ENCODE measurements at regions of chr11 and their contacts with region 1.

Region 1: GRCh38 chr11:114262681-114263512 is 33.3 kb upstream of the NNMT start:
- DNase-seq: peak; percentile 14
- ATAC-seq: peak; percentile 65
- H3K4me3 Mint-ChIP-seq: no peak overlapping the region
- H3K27ac Mint-ChIP-seq: no peak overlapping the region
- H3K4me1 Mint-ChIP-seq: no peaks in the 10 kb centered on the region
- H3K27me3 Mint-ChIP-seq: peaks cover 2% of the 10 kb centered on the region
- CTCF ChIP-seq: peak; percentile 48

Region 2: DNA sequence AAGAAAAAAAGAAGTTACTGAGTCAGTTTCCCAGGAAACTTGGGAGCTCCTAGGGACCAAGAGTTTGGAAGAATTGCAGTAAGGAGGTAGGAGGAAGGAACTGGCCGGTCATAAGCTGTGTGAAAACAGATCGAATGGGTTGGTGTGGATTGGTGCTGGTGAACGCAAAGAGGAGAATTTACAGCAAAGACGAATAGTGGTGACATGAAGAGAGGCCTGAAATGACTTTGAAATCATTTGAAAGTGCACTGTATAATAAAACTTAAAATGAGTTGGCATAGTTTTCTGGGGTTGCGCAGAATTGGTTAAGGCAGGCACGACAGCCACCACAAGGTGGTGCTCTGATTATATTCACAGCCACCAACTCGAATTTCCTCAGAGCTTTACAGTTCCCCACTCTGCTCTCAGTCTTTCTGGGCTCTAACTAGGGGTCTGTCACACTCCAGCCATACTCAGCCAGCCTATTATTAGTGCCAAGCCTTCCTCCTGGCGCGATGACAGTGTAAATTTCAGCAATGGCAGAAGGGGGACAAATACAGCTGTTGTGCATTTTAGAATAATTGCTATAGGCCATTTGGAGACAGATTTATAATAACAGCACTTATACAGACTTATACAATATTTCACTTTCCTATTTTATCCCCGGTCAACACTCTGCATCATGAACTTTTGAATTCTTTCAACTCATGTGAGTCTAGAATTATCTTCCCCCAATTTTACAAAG is 366.6 kb before region 1 on chr11:
- CTCF ChIA-PET with region 1: interaction called, 120 read pairs
- POLR2A ChIA-PET with region 1: no interaction called
- intact Hi-C with region 1: loop called (anchors 2 kb)
- DNase-seq: peak; percentile 51
- ATAC-seq: peak; percentile 47
- H3K4me3 Mint-ChIP-seq: no peak overlapping the region
- H3K27ac Mint-ChIP-seq: no peak overlapping the region
- H3K4me1 Mint-ChIP-seq: peaks cover 3% of the 10 kb centered on the region
- H3K27me3 Mint-ChIP-seq: no peaks in the 10 kb centered on the region
- CTCF ChIP-seq: peak; percentile 70

Region 3: DNA sequence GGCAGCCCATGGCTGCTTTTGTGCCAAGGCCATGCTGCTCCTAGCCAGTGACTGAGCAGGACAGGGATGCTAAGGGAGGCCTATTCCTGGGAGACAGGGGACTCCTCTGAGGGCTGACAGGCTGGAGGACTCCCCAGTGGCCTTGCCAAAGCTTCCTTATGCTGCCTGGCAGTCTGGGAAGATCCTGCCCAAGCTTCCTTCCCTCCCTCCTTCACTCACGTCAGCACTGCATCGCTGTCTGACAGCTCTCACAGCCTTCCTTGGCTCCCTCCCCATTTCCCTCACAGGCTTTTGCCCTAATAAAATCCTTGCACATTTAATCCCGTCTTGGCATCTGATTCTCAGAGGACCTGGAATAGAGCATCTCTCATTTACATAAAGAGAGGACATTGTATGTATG is 261.5 kb before region 1 on chr11:
- CTCF ChIA-PET with region 1: interaction called, 168 read pairs
- POLR2A ChIA-PET with region 1: no interaction called
- intact Hi-C with region 1: no loop called
- DNase-seq: no peak
- ATAC-seq: no peak
- H3K4me3 Mint-ChIP-seq: no peak overlapping the region
- H3K27ac Mint-ChIP-seq: no peak overlapping the region
- H3K4me1 Mint-ChIP-seq: no peaks in the 10 kb centered on the region
- H3K27me3 Mint-ChIP-seq: peaks cover 9% of the 10 kb centered on the region
- CTCF ChIP-seq: no peak

Region 4: GRCh38 chr11:114053406-114053805 is 209.5 kb before region 1 on chr11:
- CTCF ChIA-PET with region 1: interaction called, 15 read pairs
- POLR2A ChIA-PET with region 1: no interaction called
- intact Hi-C with region 1: no loop called
- DNase-seq: no peak
- ATAC-seq: no peak
- H3K4me3 Mint-ChIP-seq: no peak overlapping the region
- H3K27ac Mint-ChIP-seq: no peak overlapping the region
- H3K4me1 Mint-ChIP-seq: no peaks in the 10 kb centered on the region
- H3K27me3 Mint-ChIP-seq: peaks cover 18% of the 10 kb centered on the region
- CTCF ChIP-seq: no peak

Region 5: GRCh38 chr11:114192841-114193389 is 70.0 kb before region 1 on chr11:
- CTCF ChIA-PET with region 1: interaction called, 21 read pairs
- POLR2A ChIA-PET with region 1: no interaction called
- intact Hi-C with region 1: no loop called
- DNase-seq: no peak
- ATAC-seq: no peak
- H3K4me3 Mint-ChIP-seq: no peak overlapping the region
- H3K27ac Mint-ChIP-seq: no peak overlapping the region
- H3K4me1 Mint-ChIP-seq: peaks cover 9% of the 10 kb centered on the region
- H3K27me3 Mint-ChIP-seq: no peaks in the 10 kb centered on the region
- CTCF ChIP-seq: no peak

Region 6: DNA sequence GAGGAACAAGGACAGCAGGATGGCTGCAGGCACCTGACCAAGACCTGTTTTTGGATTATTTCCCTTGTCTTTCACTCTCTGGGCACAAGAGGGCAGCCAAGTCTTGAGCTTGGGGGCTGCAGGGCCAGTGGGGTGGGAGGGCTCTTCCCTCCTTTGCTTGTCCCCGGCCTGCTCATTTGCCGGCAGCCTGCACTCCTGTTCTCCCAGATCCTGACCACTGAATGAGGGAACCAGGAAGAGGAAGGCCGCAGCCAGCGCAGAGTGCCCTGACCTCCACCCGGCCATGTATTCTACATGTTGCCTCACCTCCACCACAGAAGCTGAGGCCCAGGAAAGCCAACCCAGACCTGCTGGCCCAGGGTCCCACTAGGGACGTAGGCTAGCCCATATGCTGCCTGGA is 17.8 kb after region 1 on chr11:
- CTCF ChIA-PET with region 1: interaction called, 20 read pairs
- POLR2A ChIA-PET with region 1: interaction called, 6 read pairs
- intact Hi-C with region 1: no loop called
- DNase-seq: peak; percentile 37
- ATAC-seq: no peak
- H3K4me3 Mint-ChIP-seq: no peak overlapping the region
- H3K27ac Mint-ChIP-seq: no peak overlapping the region
- H3K4me1 Mint-ChIP-seq: no peaks in the 10 kb centered on the region
- H3K27me3 Mint-ChIP-seq: peaks cover 28% of the 10 kb centered on the region
- CTCF ChIP-seq: peak; percentile 56

Region 7: DNA sequence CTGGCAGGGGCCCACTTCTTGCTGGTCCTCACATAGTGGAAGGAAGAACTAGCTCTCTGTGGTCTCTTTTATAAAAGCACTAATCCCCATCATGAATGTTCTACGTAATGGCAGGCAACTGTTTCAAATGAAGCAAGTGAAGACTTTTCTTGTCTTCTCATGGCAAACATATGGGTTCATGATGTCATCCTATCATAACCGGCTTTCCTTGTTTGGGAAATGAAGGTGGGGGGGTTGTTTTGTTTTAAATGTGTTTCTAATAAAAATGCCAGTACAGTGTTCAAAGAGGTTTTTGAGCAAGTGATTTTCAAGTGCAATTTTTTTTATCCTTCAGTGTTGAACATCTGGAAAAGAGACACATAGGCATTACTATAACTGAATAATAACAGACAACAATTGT is 209.8 kb after region 1 on chr11:
- CTCF ChIA-PET with region 1: no interaction called
- POLR2A ChIA-PET with region 1: no interaction called
- intact Hi-C with region 1: no loop called
- DNase-seq: no peak
- ATAC-seq: no peak
- H3K4me3 Mint-ChIP-seq: no peak overlapping the region
- H3K27ac Mint-ChIP-seq: no peak overlapping the region
- H3K4me1 Mint-ChIP-seq: no peaks in the 10 kb centered on the region
- H3K27me3 Mint-ChIP-seq: peaks cover 6% of the 10 kb centered on the region
- CTCF ChIP-seq: no peak